ENCODE measurements at regions of chr5 and their contacts with region 1.

Region 1: GRCh38 chr5:131634996-131635754 is at the start of gene RAPGEF6:
- DNase-seq: peak; percentile 100
- H3K4me3 Mint-ChIP-seq: peak within 1 kb of the TSS; percentile 94
- H3K27ac Mint-ChIP-seq: peak within 1 kb of the TSS; percentile 98
- H3K4me1 Mint-ChIP-seq: peaks cover 26% of the 10 kb centered on the region
- H3K27me3 Mint-ChIP-seq: no peaks in the 10 kb centered on the region
- total RNA-seq, gene RAPGEF6: 34.5 to 37.3 TPM

Region 2: DNA sequence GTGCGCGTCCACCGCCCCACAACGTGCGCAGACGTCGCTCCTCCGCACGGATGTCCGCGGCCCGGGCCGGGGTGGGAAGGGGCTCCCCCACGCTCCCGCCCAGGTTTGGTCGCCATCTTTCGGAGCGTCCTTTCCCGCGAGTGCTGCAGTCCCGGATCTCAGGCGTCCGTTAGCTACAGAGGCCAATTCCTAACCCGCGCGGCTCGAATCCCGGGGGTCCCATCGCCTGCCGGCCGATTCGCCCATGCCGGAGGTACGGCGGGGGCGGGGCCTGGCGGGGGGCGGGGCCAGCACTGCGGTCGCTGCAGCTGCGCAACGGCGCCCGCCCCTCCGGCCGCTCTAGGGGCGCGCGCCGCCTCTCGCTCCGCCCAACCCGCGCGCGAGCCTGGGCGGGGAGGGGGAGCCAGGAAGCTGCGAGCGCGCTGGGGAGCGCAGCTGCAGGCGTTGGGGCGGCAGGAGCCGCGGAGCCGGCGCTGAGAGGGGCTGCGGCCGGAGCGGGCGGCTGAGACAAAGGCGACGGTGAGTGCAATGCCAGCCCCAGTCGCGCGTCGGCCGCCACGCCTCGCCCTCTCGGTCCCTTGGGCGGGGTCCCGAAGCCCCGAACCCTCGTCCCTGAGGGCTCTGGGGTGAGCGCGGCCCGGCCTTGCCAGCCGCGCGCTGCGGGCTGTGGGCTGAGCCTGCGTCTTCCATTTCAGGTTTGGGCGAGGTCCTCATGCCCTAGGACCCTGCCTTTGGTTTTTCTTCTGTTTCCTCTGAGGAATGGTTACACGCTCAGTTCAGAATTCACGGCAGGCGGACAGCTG is 371.3 kb before region 1 on chr5 and contains the start of gene CDC42SE2:
- CTCF ChIA-PET with region 1: no interaction called
- intact Hi-C with region 1: loop called (anchors 2 kb)
- DNase-seq: peak; percentile 81
- H3K4me3 Mint-ChIP-seq: peak within 1 kb of the TSS; percentile 75
- H3K27ac Mint-ChIP-seq: peak within 1 kb of the TSS; percentile 93
- H3K4me1 Mint-ChIP-seq: peaks cover 48% of the 10 kb centered on the region
- H3K27me3 Mint-ChIP-seq: no peaks in the 10 kb centered on the region
- total RNA-seq, gene CDC42SE2: 106 to 108 TPM

Region 3: GRCh38 chr5:131548176-131548575 is 87.0 kb before region 1 on chr5:
- CTCF ChIA-PET with region 1: no interaction called
- intact Hi-C with region 1: loop called (anchors 1 kb)
- DNase-seq: no peak
- H3K4me3 Mint-ChIP-seq: peak overlapping the region; percentile 89
- H3K27ac Mint-ChIP-seq: peak overlapping the region; percentile 99
- H3K4me1 Mint-ChIP-seq: peaks cover 72% of the 10 kb centered on the region
- H3K27me3 Mint-ChIP-seq: no peaks in the 10 kb centered on the region

Region 4: GRCh38 chr5:131671994-131672655 is 37.0 kb after region 1 on chr5:
- CTCF ChIA-PET with region 1: interaction called, 4 read pairs
- intact Hi-C with region 1: loop called (anchors 2 kb)
- DNase-seq: no peak
- H3K4me3 Mint-ChIP-seq: no peak overlapping the region
- H3K27ac Mint-ChIP-seq: no peak overlapping the region
- H3K4me1 Mint-ChIP-seq: peaks cover 23% of the 10 kb centered on the region
- H3K27me3 Mint-ChIP-seq: no peaks in the 10 kb centered on the region

Region 5: GRCh38 chr5:132007399-132008165 is 372.4 kb after region 1 on chr5:
- CTCF ChIA-PET with region 1: interaction called, 4 read pairs
- intact Hi-C with region 1: loop called (anchors 1 kb)
- DNase-seq: peak; percentile 93
- H3K4me3 Mint-ChIP-seq: no peak overlapping the region
- H3K27ac Mint-ChIP-seq: no peak overlapping the region
- H3K4me1 Mint-ChIP-seq: peaks cover 17% of the 10 kb centered on the region
- H3K27me3 Mint-ChIP-seq: peaks cover 19% of the 10 kb centered on the region

Region 6: GRCh38 chr5:132426525-132427138 is 791.5 kb after region 1 on chr5:
- CTCF ChIA-PET with region 1: no interaction called
- intact Hi-C with region 1: loop called (anchors 5 kb)
- DNase-seq: peak; percentile 83
- H3K4me3 Mint-ChIP-seq: peak overlapping the region; percentile 46
- H3K27ac Mint-ChIP-seq: peak overlapping the region; percentile 95
- H3K4me1 Mint-ChIP-seq: peaks cover 94% of the 10 kb centered on the region
- H3K27me3 Mint-ChIP-seq: no peaks in the 10 kb centered on the region